Mammary epithelial cell (primary cell): ENCODE measurements at regions of chr16 and their contacts with region 1.

Region 1: DNA sequence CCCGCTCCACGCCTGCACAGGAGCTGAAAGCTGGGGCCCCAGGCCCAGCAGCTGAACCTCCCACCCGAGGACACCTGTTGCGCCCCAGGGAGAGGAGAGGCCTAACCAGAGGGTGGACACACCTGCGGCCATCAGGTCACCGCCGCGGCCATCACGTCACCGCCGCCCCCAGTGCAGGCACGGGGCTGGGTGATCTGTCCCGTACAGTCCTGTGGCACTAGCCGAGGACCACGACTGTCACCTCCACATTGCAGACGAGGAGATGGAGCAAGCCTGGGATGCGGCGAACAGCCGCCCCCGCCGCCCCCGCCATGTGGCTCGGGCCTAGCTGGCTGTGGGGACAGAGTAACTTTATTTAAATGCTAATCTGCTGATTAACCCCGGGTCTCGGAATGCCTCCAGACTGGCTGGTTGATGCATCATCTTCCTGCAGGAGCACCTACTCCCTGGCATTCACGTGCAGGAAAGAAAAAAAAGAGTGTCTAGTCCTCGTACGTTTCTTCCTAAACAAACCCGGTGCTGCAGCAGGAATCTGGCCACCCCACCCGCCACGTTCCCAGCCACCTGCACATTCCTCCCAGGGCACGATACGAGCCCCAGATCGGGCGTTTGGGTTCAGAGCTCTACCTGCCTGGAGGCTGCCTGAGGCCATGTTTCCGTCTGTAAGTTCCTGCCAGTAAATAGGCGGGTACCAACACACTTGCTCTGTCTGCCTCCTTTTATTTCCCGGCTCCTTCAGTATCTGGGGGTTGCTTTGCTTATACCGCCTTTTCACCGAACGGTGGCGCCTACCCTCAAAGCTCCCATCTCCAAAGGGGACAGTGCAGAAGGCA is 29.9 kb downstream of the PIEZO1 start:
- DNase-seq: peak; percentile 85
- H3K4me3 ChIP-seq: no peak overlapping the region
- H3K27ac ChIP-seq: peak overlapping the region; percentile 5
- H3K4me1 ChIP-seq: peaks cover 27% of the 10 kb centered on the region
- H3K27me3 ChIP-seq: no peaks in the 10 kb centered on the region
- CTCF ChIP-seq: peak; percentile 39 to 61

Region 2: DNA sequence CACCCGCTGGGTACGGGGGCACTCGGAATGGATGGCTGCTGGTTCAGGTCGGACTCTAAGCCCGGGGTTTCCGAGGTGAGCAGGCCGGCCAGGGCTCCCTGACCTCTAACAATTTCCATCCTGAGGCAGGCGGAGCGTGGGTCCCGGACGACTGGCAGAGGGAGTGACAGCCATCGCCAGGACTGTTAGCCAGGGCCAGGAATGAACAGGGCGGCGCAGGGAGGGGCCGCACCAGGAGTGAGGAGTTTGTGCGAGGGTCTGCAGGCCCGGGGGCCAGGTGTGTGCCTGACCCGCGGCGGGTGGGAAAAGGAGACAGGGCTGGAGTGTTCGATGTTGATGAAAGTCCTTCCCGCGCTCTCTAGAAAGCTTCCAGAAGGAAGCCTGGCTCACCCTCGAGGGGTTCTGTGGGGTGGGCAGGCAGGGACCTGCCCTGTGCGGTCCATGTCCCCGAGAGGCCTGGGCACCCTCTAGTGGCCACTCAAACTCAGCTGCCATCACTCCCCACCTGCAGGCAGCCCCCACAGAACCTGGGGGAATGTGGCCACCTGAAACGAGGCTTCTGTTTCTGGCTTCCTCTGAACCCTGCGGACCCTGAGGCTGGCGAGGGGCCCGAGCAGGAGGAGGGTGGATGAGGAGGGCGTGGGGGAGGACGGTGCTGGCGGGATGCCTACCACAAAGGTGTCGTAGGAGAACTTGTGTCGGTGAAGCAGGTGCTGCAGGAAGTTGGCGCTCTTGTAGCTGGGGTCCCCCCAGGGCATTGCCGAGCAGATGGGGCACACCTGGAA is 57.1 kb before region 1 on chr16:
- CTCF ChIA-PET with region 1: no interaction called
- dilution Hi-C with region 1: loop called (anchors 5 kb)
- in situ Hi-C with region 1: no loop called
- intact Hi-C with region 1: no loop called
- DNase-seq: no peak
- H3K4me3 ChIP-seq: no peak overlapping the region
- H3K27ac ChIP-seq: no peak overlapping the region
- H3K4me1 ChIP-seq: peaks cover 4% of the 10 kb centered on the region
- H3K27me3 ChIP-seq: no peaks in the 10 kb centered on the region
- CTCF ChIP-seq: peak; percentile 45 to 52

Region 3: DNA sequence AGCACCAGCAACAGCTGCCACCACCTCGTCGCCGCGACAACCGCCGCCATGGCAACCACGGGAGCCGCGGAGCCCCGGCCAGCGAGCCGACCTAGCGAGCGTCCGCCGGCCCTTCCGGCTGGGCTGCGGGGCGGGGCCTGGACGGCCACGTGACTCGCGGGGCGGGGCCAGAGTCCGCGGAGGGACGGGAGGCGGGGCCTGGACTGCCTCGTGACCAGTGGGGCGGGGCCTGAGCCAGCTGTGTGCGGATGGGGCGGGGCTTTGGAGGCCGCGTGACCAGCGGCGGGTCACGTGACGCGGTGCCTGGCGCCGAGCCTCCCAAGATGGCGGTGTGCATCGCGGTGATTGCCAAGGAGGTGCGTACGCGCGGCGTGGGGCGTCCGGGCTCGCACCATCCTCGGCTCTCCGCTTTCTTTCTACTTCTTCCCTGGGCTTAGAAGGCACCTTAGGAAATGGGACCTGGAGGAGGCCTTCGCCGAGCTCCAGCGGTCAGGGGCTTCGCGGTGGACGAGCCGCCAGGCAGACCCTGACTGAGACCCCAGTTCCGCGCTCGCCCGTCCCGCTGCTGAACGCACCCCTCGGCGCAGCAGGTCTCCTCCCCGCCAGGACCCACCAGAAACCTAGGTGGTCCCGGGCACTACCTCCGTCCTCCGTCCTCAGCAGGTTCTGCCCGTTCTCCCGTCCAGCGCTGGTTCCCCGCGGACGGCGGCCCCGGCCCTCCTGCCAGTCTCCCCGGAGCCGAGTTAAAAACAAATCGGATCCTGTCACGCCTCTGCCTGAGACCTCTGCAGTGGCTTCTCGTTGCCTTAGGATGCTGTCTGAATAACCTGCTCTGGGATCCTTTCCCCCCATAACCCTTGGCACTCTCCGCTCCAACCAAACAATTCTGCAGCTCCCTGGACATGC is 102.0 kb after region 1 on chr16 and contains the starts of genes GALNS and TRAPPC2L:
- CTCF ChIA-PET with region 1: no interaction called
- dilution Hi-C with region 1: loop called (anchors 10 kb)
- in situ Hi-C with region 1: no loop called
- intact Hi-C with region 1: no loop called
- DNase-seq: peak; percentile 89
- H3K4me3 ChIP-seq: peak within 1 kb of the TSS; percentile 84 to 99 (median 85)
- H3K27ac ChIP-seq: peak within 1 kb of the TSS; percentile 63
- H3K4me1 ChIP-seq: peaks cover 16% of the 10 kb centered on the region
- H3K27me3 ChIP-seq: no peaks in the 10 kb centered on the region
- CTCF ChIP-seq: no peak
- total RNA-seq, gene GALNS: 21.7 to 29.8 TPM
- total RNA-seq, gene TRAPPC2L: 21.5 to 39.9 TPM

Region 4: DNA sequence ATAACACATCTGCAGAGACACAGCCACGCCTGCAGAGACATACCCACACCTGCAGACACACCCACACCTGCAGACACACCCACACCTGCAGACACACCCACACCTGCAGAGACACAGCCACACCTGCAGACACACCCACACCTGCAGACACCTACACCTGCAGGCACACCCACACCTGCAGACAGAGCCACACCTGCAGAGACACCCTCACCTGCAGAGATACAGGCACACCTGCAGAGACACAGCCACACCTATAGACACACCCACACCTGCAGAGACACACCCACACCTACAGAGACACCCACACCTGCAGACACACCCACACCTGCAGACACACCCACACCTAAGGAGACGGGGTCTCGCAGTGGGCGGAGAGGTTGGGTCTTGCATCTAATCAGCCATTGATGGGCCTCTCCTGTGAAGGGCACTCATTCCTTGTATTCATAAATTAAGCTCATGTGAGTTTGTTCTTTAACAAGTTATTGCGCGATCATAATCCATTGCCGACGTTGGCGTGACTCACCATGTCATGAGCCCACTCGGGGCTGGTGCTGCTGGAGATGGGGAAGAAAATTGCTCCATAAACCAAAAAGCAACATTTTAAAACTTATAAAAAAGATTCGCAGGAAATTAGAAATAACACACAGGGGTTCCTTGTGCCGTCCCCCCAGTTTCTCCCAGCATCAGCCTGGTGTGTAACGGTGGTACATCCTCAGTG is 387.5 kb after region 1 on chr16:
- CTCF ChIA-PET with region 1: no interaction called
- dilution Hi-C with region 1: loop called (anchors 5 kb)
- in situ Hi-C with region 1: no loop called
- intact Hi-C with region 1: no loop called
- DNase-seq: no peak
- H3K4me3 ChIP-seq: no peak overlapping the region
- H3K27ac ChIP-seq: no peak overlapping the region
- H3K4me1 ChIP-seq: no peaks in the 10 kb centered on the region
- H3K27me3 ChIP-seq: no peaks in the 10 kb centered on the region
- CTCF ChIP-seq: no peak

Region 5: GRCh38 chr16:89308390-89309333 is 553.5 kb after region 1 on chr16:
- CTCF ChIA-PET with region 1: no interaction called
- dilution Hi-C with region 1: loop called (anchors 10 kb)
- in situ Hi-C with region 1: no loop called
- intact Hi-C with region 1: no loop called
- DNase-seq: no peak
- H3K4me3 ChIP-seq: no peak overlapping the region
- H3K27ac ChIP-seq: no peak overlapping the region
- H3K4me1 ChIP-seq: peaks cover 4% of the 10 kb centered on the region
- H3K27me3 ChIP-seq: no peaks in the 10 kb centered on the region
- CTCF ChIP-seq: peak; percentile 46 to 49